Left ventricle myocardium inferior (tissue), 1 donor: ENCODE measurements at regions of chrX and their contacts with region 1.

Region 1: DNA sequence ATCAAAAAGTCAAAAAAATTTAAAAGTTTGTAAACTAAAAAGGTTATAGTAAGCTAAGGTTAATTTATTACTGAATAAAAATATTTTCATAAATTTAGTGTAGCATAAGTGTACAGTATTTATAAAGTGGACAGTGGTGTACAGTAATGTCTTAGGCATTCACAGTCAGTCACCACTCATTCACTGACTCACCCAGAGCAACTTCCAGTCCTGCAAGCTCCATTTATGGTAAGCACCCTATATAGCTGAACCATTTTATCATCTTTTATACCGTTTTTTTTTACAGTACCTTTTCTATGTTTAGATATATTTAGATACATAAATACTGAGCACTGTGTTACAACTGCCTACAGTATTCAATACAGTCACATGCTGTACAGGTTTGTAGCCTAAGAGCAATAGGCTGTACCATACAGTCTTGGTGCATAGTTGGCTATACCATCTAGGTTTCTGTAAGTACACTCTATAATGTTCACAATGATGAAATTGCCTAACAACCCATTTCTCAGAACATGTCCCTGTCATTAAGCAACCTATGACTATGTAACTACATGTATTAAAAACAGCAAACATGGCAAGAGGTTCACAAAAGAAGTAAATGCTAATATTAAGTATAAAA is 18.6 kb downstream of the ACSL4 start:
- DNase-seq: no peak
- H3K4me3 ChIP-seq: no peak overlapping the region
- H3K27ac ChIP-seq: no peak overlapping the region
- H3K4me1 ChIP-seq: peaks cover 27% of the 10 kb centered on the region
- H3K27me3 ChIP-seq: no peaks in the 10 kb centered on the region
- CTCF ChIP-seq: no peak

Region 2: DNA sequence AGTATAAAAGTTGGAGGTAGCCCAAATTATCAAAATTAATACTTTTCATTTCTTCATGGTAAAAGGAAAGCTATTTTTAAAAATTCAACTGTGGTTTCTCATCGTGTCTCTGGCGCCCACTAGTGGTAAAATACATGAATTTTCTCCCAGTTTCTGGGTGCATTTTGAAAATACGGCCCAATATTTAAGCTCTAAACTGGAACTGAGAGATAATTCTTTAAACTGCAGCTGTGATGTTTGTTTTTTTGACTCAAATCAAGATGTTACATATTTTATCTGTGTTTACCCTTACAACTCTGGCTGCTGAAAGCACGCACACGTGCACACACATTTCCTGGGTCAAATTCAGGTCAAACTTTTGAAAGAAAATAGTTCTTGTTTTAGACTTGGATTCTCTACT is 142.5 kb after region 1 on chrX:
- intact Hi-C with region 1: loop called (anchors 10 kb)
- DNase-seq: no peak
- H3K4me3 ChIP-seq: no peak overlapping the region
- H3K27ac ChIP-seq: peak overlapping the region; percentile 55
- H3K4me1 ChIP-seq: peaks cover 8% of the 10 kb centered on the region
- H3K27me3 ChIP-seq: no peaks in the 10 kb centered on the region
- CTCF ChIP-seq: peak; percentile 82

Region 3: GRCh38 chrX:109886122-109886761 is 171.8 kb after region 1 on chrX:
- intact Hi-C with region 1: loop called (anchors 10 kb)
- DNase-seq: peak; percentile 15
- H3K4me3 ChIP-seq: no peak overlapping the region
- H3K27ac ChIP-seq: no peak overlapping the region
- H3K4me1 ChIP-seq: no peaks in the 10 kb centered on the region
- H3K27me3 ChIP-seq: no peaks in the 10 kb centered on the region
- CTCF ChIP-seq: peak; percentile 72